PC-3 (cell line): ENCODE measurements at regions of chr14 and their contacts with region 1.

Region 1: GRCh38 chr14:58227096-58227819 is 17.4 kb upstream of the PSMA3 start:
- DNase-seq: no peak
- ATAC-seq: no peak
- H3K4me3 ChIP-seq: no peak overlapping the region
- H3K27ac ChIP-seq: no peak overlapping the region
- H3K4me1 ChIP-seq: no peaks in the 10 kb centered on the region
- H3K27me3 ChIP-seq: no peaks in the 10 kb centered on the region
- CTCF ChIP-seq: no peak

Region 2: GRCh38 chr14:58239244-58240195 is 12.3 kb after region 1 on chr14:
- CTCF ChIA-PET with region 1: no interaction called
- POLR2A ChIA-PET with region 1: interaction called, 15 read pairs
- intact Hi-C with region 1: no loop called
- DNase-seq: peak; percentile 98
- ATAC-seq: peak; percentile 37
- H3K4me3 ChIP-seq: peak overlapping the region; percentile 72
- H3K27ac ChIP-seq: no peak overlapping the region
- H3K4me1 ChIP-seq: peaks cover 14% of the 10 kb centered on the region
- H3K27me3 ChIP-seq: no peaks in the 10 kb centered on the region
- CTCF ChIP-seq: no peak